GM10248 (cell line): ENCODE measurements at regions of chr17 and their contacts with region 1.

Region 1: GRCh38 chr17:17985555-17985954 is 12.9 kb downstream of the DRC3 start:
- DNase-seq: peak; percentile 59
- CTCF ChIP-seq: peak; percentile 26

Region 2: GRCh38 chr17:17819561-17819995 is 166.0 kb before region 1 on chr17:
- CTCF ChIA-PET with region 1: no interaction called
- POLR2A ChIA-PET with region 1: no interaction called
- DNase-seq: peak; percentile 89
- CTCF ChIP-seq: no peak

Region 3: DNA sequence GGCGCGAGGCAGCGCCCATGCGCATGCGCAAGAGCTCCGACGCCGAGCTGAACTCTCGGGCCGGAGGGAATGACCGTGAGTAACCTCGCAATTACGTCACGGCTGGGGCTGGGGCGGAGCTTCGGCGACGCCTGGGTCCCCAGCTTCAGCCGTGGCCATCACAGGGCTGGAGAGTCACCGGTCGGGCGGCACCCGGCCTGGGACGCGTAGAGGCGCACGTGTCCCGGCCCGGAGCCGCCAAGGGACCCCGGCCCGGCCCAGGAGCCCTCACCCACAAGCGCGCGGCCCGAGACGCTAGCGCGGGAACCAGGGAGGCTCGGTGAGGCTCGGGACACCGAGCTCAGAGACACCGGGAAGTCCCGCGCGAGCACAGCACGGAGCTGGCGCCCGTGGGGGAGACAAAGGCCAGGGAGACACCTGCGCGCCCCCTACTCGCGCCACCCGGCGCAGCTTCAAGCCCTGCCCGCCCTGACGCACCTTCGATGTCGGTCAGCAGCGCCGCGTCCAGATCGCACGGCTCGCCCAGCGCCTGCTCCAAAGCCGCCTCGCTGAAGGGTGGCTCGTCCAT is 149.2 kb before region 1 on chr17:
- CTCF ChIA-PET with region 1: no interaction called
- POLR2A ChIA-PET with region 1: no interaction called
- DNase-seq: peak; percentile 96
- CTCF ChIP-seq: no peak

Region 4: DNA sequence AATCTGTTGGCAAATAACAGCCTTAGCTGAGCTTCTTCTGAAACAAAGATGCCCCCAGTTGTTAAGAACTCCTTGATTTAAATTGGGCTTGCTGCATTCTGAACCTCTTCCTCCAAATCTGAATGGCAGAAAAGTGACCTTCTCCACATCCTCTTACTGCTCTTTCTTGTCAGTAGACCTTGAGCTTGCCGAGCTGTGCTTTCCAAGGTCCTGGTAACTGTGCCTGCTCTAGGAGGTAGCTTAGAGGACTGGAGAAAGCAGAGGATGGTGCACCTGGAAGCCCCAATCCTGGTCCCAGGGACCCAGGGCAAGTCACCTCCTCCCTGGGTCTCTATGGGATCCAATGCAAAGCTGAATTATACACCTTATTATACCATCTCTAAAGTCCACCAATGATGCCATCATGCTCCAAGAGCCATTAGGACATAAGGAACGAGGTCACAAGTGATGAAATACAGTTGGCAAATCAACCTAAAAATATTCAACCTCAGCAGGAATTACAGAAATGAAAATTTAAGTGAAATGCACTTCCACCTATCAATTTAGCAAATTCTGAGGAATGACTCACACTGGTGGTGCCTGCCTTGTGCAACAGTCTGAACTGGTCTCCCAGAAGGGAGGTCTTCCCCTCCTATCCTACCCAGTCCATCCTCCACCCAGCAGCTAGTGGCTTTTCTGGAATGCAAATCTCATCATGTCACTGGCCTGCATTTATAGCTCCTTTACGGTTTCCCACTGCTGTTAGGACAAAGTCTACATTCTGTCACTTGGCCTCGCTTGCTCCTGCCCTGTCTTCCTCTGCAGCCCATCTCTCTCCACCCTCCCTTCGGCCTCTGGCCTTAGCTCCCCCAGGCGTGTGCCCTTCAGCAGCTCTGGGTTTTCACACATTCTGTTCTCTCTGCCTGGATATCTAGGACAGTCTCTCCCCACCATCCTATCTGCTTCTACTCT is 50.0 kb before region 1 on chr17:
- CTCF ChIA-PET with region 1: no interaction called
- POLR2A ChIA-PET with region 1: no interaction called
- DNase-seq: no peak
- CTCF ChIP-seq: no peak

Region 5: GRCh38 chr17:17972126-17972951 is 13.2 kb before region 1 on chr17 and contains the starts of genes DRC3 and TOM1L2:
- CTCF ChIA-PET with region 1: interaction called, 14 read pairs
- POLR2A ChIA-PET with region 1: no interaction called
- DNase-seq: peak; percentile 99
- CTCF ChIP-seq: no peak

Region 6: GRCh38 chr17:18033442-18034099 is 48.0 kb after region 1 on chr17:
- CTCF ChIA-PET with region 1: interaction called, 19 read pairs
- POLR2A ChIA-PET with region 1: no interaction called
- DNase-seq: peak; percentile 80
- CTCF ChIP-seq: peak; percentile 63